HEK293 (cell line): ENCODE measurements at regions of chr17 and their contacts with region 1.

Region 1: GRCh38 chr17:47895856-47896671 is at the start of gene SP2:
- H3K4me3 ChIP-seq: peak within 1 kb of the TSS; percentile 95
- H3K27ac ChIP-seq: peak within 1 kb of the TSS; percentile 98
- H3K4me1 ChIP-seq: peaks cover 4% of the 10 kb centered on the region; the same call in 1 of the 2 replicates
- CTCF ChIP-seq: no peak; the same call in 1 of the 2 replicates

Region 2: GRCh38 chr17:47763913-47764582 is 132.0 kb before region 1 on chr17:
- CTCF ChIA-PET with region 1: no interaction called
- POLR2A ChIA-PET with region 1: no interaction called
- H3K4me3 ChIP-seq: no peak overlapping the region
- H3K27ac ChIP-seq: no peak overlapping the region
- H3K4me1 ChIP-seq: no peaks in the 10 kb centered on the region
- CTCF ChIP-seq: no peak

Region 3: GRCh38 chr17:47781397-47781796 is 114.7 kb before region 1 on chr17:
- CTCF ChIA-PET with region 1: no interaction called
- POLR2A ChIA-PET with region 1: no interaction called
- H3K4me3 ChIP-seq: no peak overlapping the region
- H3K27ac ChIP-seq: no peak overlapping the region
- H3K4me1 ChIP-seq: no peaks in the 10 kb centered on the region
- CTCF ChIP-seq: no peak

Region 4: GRCh38 chr17:47831003-47831933 is 64.8 kb before region 1 on chr17 and contains the starts of genes LRRC46 and MRPL10:
- CTCF ChIA-PET with region 1: interaction called, 837 read pairs
- POLR2A ChIA-PET with region 1: interaction called, 28 read pairs
- H3K4me3 ChIP-seq: peak within 1 kb of the TSS; percentile 92
- H3K27ac ChIP-seq: peak within 1 kb of the TSS; percentile 21
- H3K4me1 ChIP-seq: peaks cover 7% of the 10 kb centered on the region; the same call in 1 of the 2 replicates
- CTCF ChIP-seq: peak; percentile 46; the same call in 1 of the 2 replicates

Region 5: DNA sequence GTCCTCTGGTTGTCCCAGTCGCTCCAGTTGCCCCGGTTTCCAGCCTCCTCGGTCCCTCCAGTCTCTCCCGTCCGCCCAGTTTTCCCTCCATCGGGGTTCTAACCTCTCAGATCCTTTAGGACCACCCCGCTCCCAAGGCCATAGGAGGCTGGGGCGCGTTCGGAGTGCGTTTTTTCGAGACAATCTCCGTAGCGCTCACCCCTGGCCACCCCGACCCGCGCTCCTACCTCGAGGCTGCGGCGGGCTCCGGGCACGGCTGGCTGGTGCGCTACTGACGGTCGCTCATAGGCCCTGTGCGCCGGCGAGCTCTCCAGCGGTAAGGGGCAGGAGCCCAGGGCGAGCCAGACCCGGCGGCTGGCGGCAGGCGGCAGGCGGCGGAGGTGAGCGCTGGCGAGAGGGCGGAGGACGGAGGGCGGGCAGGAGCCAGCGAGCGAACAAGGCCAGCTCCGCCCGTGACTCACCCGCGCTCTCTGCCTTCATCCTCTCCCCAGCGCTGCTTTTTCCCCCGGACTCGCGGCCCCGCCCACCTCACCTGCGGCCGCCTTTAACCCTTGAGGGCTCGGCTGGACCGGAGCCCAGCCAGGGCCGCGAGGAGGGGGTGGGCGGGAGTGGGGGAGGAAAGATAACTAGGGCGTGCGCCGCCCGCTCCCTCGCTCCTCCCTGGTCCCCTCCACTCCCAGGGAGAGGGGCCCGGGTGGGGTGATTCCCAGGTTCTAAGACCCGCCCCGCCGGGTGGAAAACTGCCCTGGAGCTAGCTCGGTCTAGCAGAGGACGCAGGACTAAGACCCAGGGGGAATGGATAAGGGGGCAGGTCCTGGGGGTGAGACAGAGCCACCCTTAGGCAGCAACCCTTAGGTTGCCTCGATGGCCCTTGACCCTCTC is 45.1 kb before region 1 on chr17 and contains the start of gene SP6:
- CTCF ChIA-PET with region 1: interaction called, 837 read pairs
- POLR2A ChIA-PET with region 1: interaction called, 15 read pairs
- H3K4me3 ChIP-seq: peak within 1 kb of the TSS; percentile 46
- H3K27ac ChIP-seq: peak within 1 kb of the TSS; percentile 38; the same call in 1 of the 2 replicates
- H3K4me1 ChIP-seq: peaks cover 4% of the 10 kb centered on the region; the same call in 1 of the 2 replicates
- CTCF ChIP-seq: peak; percentile 70

Region 6: DNA sequence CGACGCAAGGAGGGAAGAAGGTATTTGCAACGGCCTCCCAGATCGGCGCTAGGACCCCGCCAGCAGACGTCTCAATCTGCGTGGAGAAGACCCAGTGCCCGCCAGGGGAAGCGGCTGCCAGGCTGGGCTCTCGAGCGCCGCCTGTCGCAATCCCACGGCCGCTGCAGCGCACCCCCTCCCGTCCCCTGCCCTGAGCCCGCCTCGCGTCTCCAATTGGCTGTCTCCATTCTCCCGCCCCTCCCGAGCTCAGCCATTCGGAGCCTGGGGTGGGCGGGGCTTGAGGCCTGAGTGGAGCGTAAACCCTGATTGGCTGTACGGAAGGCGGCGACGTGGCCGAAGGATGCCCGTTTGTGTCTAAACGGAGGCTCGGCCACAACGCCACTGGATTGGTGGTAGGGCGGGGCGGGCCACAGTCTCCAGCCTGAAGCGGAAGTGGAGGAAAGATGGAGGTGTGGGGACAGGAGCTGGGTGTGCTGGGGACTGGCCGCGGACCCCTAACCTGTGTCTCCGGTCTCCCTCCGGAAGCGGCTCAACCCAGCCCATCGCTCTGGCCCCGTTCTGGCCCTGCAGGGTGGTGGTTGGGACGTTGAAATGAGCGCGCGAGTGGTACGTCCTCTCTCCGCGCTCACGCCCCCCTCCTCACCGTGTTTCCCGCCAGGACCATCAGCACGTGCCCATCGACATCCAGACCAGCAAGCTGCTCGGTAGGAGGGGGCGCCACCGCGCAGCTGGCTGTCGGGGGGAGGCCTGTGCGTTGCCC is 74.8 kb after region 1 on chr17 and contains the start of gene CDK5RAP3:
- CTCF ChIA-PET with region 1: interaction called, 4 read pairs
- POLR2A ChIA-PET with region 1: interaction called, 18 read pairs
- H3K4me3 ChIP-seq: peak within 1 kb of the TSS; percentile 87
- H3K27ac ChIP-seq: peak within 1 kb of the TSS; percentile 69; the same call in 1 of the 2 replicates
- H3K4me1 ChIP-seq: peaks cover 7% of the 10 kb centered on the region; the same call in 1 of the 2 replicates
- CTCF ChIP-seq: peak; percentile 99

Region 7: GRCh38 chr17:47990962-47991731 is 95.1 kb after region 1 on chr17:
- CTCF ChIA-PET with region 1: no interaction called
- POLR2A ChIA-PET with region 1: no interaction called
- H3K4me3 ChIP-seq: no peak overlapping the region
- H3K27ac ChIP-seq: no peak overlapping the region
- H3K4me1 ChIP-seq: peaks cover 4% of the 10 kb centered on the region; the same call in 1 of the 2 replicates
- CTCF ChIP-seq: no peak